ENCODE measurements at regions of chr7 and their contacts with region 1.

Region 1: GRCh38 chr7:67377939-67378862 is 381.6 kb downstream of the TYW1 start:
- DNase-seq: peak; percentile 85
- ATAC-seq: peak; percentile 97
- H3K4me3 Mint-ChIP-seq: no peak overlapping the region
- H3K27ac Mint-ChIP-seq: no peak overlapping the region
- H3K4me1 Mint-ChIP-seq: no peaks in the 10 kb centered on the region
- H3K27me3 Mint-ChIP-seq: peaks cover 14% of the 10 kb centered on the region
- CTCF ChIP-seq: peak; percentile 97

Region 2: GRCh38 chr7:67392643-67393438 is 14.6 kb after region 1 on chr7:
- CTCF ChIA-PET with region 1: interaction called, 14 read pairs
- POLR2A ChIA-PET with region 1: no interaction called
- DNase-seq: peak; percentile 45
- ATAC-seq: peak; percentile 85
- H3K4me3 Mint-ChIP-seq: peak overlapping the region; percentile 58
- H3K27ac Mint-ChIP-seq: peak overlapping the region; percentile 96
- H3K4me1 Mint-ChIP-seq: peaks cover 37% of the 10 kb centered on the region
- H3K27me3 Mint-ChIP-seq: no peaks in the 10 kb centered on the region
- CTCF ChIP-seq: no peak

Region 3: GRCh38 chr7:67484244-67484751 is 106.1 kb after region 1 on chr7:
- CTCF ChIA-PET with region 1: interaction called, 52 read pairs
- POLR2A ChIA-PET with region 1: no interaction called
- DNase-seq: peak; percentile 80
- ATAC-seq: peak; percentile 86
- H3K4me3 Mint-ChIP-seq: peak overlapping the region; percentile 59
- H3K27ac Mint-ChIP-seq: peak overlapping the region; percentile 43; the same call in 1 of the 2 replicates
- H3K4me1 Mint-ChIP-seq: peaks cover 17% of the 10 kb centered on the region
- H3K27me3 Mint-ChIP-seq: peaks cover 12% of the 10 kb centered on the region
- CTCF ChIP-seq: peak; percentile 49

Region 4: DNA sequence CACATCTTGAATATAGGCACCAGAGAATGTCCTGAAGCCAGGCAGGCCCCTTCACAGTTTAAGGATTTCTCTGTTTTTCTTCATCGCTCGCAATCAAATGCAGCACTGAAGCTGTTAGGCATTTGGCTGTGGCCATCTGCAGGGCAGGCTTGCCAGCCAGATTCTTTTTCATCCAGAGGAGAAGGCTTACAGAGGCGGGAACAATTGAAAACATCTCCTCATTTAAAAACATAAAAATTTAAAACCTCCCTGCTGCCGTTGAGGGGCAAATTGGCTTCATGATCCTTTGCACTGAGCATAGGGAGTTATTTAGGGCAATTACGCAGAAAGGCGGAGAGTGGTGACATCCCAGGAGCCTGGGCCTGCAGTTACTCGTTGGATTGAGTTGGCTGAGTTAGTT is 118.4 kb after region 1 on chr7:
- CTCF ChIA-PET with region 1: interaction called, 10 read pairs
- POLR2A ChIA-PET with region 1: no interaction called
- DNase-seq: no peak
- ATAC-seq: no peak
- H3K4me3 Mint-ChIP-seq: no peak overlapping the region
- H3K27ac Mint-ChIP-seq: no peak overlapping the region
- H3K4me1 Mint-ChIP-seq: no peaks in the 10 kb centered on the region
- H3K27me3 Mint-ChIP-seq: no peaks in the 10 kb centered on the region
- CTCF ChIP-seq: no peak

Region 5: DNA sequence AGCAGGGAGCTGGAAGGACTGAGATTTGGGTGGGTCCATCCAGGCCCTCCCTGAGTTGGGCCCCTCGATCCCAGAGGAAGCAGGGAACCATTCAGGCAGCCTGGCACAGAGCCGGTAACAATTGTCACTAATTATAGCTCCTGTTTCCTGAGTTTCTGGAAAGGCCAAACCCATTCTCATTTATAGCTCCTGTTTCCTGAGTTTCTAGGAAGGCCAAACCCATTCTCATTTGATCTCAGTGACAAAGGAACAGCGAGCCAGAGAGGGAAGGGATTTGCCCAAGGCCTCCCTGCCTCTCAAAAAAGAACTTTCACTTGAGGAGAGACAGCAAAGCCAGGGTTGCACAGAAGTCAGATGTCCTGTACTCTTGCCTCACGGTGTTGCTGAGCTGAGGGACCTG is 140.4 kb after region 1 on chr7:
- CTCF ChIA-PET with region 1: no interaction called
- POLR2A ChIA-PET with region 1: no interaction called
- DNase-seq: no peak
- ATAC-seq: no peak
- H3K4me3 Mint-ChIP-seq: no peak overlapping the region
- H3K27ac Mint-ChIP-seq: no peak overlapping the region; the same call in 1 of the 2 replicates
- H3K4me1 Mint-ChIP-seq: peaks cover 21% of the 10 kb centered on the region
- H3K27me3 Mint-ChIP-seq: peaks cover 9% of the 10 kb centered on the region
- CTCF ChIP-seq: no peak

Measured in WTC11 (cell line).